ENCODE measurements at regions of chr7 and their contacts with region 1.

Region 1: DNA sequence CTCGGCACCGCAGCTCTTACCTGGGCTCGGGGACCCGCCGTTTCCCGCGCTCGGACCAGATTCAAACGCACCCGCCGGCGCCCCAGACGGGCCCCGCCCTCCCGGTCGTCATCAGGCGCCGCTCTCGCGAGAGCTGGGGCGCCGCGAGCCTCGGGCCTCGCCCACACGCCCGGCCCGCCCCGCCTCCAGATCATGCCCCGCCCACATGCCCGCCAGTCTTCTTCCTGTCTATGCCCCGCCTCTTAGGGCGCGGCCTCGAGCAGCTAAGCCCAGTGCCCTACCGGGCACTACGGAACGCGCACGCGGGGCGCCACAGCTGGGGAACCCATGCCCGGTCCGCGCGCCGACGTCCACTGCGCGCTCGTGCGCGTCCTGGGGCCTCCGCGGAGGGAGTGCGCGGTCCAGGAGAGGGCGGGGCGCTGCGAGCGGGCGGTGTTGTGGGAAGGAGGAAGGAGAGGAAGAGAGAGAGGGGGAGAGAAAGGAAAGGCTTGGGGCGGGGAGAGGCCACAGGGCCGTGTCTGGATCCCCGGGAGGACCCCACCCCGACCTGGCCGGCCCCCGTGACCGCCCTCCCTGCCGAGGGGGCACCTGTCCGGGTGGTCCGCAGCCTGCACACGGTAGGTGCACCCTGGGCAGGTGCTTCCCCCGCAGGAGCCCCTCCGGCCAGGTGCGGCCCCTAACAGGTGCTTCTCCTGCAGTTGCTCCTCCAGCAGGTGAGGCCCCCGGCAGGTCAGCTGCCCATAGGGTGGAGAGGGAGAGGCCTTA is at the start of gene NCAPG2:
- DNase-seq: peak; percentile 97 to 100 (median 98)
- ATAC-seq: peak; percentile 98
- H3K4me3 ChIP-seq: peak within 1 kb of the TSS; percentile 97
- H3K4me3 Mint-ChIP-seq: peak within 1 kb of the TSS; percentile 96
- H3K27ac ChIP-seq: peak within 1 kb of the TSS; percentile 52 to 70
- H3K27ac Mint-ChIP-seq: peak within 1 kb of the TSS; percentile 62
- H3K4me1 ChIP-seq: peaks cover 23% of the 10 kb centered on the region
- H3K4me1 Mint-ChIP-seq: peaks cover 24% of the 10 kb centered on the region
- H3K27me3 ChIP-seq: no peaks in the 10 kb centered on the region
- H3K27me3 Mint-ChIP-seq: no peaks in the 10 kb centered on the region
- CTCF ChIP-seq: peak; percentile 16
- total RNA-seq, gene NCAPG2: 9.9 to 11.8 TPM

Region 2: GRCh38 chr7:157138424-157139110 is 1566.3 kb before region 1 on chr7 and contains the start of gene UBE3C:
- CTCF ChIA-PET with region 1: no interaction called
- POLR2A ChIA-PET with region 1: no interaction called
- intact Hi-C with region 1: loop called in 1 of 2 experiments (anchors 10 kb)
- DNase-seq: peak; percentile 79 to 97 (median 90)
- ATAC-seq: peak; percentile 81
- H3K4me3 ChIP-seq: peak within 1 kb of the TSS; percentile 78
- H3K4me3 Mint-ChIP-seq: peak within 1 kb of the TSS; percentile 92
- H3K27ac ChIP-seq: peak within 1 kb of the TSS; percentile 85 to 86
- H3K27ac Mint-ChIP-seq: peak within 1 kb of the TSS; percentile 98
- H3K4me1 ChIP-seq: peaks cover 44% of the 10 kb centered on the region
- H3K4me1 Mint-ChIP-seq: peaks cover 49% of the 10 kb centered on the region
- H3K27me3 ChIP-seq: no peaks in the 10 kb centered on the region
- H3K27me3 Mint-ChIP-seq: no peaks in the 10 kb centered on the region
- CTCF ChIP-seq: no peak
- total RNA-seq, gene UBE3C: 30.8 to 32.3 TPM

Region 3: DNA sequence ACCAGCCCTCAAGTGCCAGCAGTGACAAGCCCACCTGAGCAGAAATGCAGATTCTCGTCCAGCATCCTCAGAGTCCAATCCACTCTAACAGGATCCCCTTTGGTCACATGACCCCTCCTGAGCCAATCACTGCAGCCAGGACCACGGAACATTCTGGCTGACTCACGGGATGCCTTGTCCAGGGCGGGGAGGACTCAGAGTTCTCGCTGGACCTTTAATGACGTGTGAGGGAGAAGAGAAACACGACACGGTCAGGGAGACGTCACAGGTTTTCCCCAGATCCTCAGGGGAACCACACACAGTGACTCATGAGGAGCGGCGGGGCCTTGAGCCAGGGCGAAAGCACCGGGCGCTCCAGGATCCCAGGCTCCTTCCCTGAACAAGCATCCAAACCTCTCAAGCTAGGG is 272.9 kb before region 1 on chr7:
- CTCF ChIA-PET with region 1: no interaction called
- POLR2A ChIA-PET with region 1: no interaction called
- intact Hi-C with region 1: no loop called
- DNase-seq: no peak
- ATAC-seq: no peak
- H3K4me3 ChIP-seq: no peak overlapping the region
- H3K4me3 Mint-ChIP-seq: no peak overlapping the region
- H3K27ac ChIP-seq: no peak overlapping the region
- H3K27ac Mint-ChIP-seq: no peak overlapping the region
- H3K4me1 ChIP-seq: no peaks in the 10 kb centered on the region
- H3K4me1 Mint-ChIP-seq: no peaks in the 10 kb centered on the region
- H3K27me3 ChIP-seq: peaks cover 0 to 2% of the 10 kb centered on the region in 2 experiments
- H3K27me3 Mint-ChIP-seq: peaks cover 12% of the 10 kb centered on the region
- CTCF ChIP-seq: no peak

Region 4: DNA sequence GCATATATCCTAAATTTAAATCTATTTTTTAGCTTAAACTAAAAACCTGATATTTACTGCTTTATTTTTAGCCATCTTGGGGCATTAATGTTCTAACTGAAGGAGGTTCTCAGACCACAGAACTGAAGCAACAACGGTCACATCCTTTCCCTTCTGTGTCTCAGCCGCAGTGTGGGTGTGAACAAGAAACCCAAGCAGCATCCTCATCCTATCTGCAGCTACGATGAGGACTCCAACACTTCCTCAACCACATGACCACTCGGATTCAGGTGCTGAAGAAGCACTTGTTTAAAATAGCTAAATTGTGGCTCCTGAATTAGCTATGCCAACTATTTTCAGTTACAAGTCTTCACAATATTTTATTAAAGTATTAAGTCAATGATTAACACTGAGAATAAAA is 119.1 kb after region 1 on chr7:
- CTCF ChIA-PET with region 1: interaction called, 8 read pairs
- POLR2A ChIA-PET with region 1: interaction called, 13 read pairs
- intact Hi-C with region 1: loop called (anchors 1 to 10 kb)
- DNase-seq: peak in 10 of 14 experiments; percentile 41 to 95 (median 58)
- ATAC-seq: peak; percentile 75
- H3K4me3 ChIP-seq: no peak overlapping the region
- H3K4me3 Mint-ChIP-seq: peak overlapping the region; percentile 84
- H3K27ac ChIP-seq: peak overlapping the region in 1 of 2 donors; percentile 53
- H3K27ac Mint-ChIP-seq: peak overlapping the region; percentile 90
- H3K4me1 ChIP-seq: peaks cover 59% of the 10 kb centered on the region
- H3K4me1 Mint-ChIP-seq: peaks cover 70% of the 10 kb centered on the region
- H3K27me3 ChIP-seq: no peaks in the 10 kb centered on the region
- H3K27me3 Mint-ChIP-seq: no peaks in the 10 kb centered on the region
- CTCF ChIP-seq: no peak

Region 5: DNA sequence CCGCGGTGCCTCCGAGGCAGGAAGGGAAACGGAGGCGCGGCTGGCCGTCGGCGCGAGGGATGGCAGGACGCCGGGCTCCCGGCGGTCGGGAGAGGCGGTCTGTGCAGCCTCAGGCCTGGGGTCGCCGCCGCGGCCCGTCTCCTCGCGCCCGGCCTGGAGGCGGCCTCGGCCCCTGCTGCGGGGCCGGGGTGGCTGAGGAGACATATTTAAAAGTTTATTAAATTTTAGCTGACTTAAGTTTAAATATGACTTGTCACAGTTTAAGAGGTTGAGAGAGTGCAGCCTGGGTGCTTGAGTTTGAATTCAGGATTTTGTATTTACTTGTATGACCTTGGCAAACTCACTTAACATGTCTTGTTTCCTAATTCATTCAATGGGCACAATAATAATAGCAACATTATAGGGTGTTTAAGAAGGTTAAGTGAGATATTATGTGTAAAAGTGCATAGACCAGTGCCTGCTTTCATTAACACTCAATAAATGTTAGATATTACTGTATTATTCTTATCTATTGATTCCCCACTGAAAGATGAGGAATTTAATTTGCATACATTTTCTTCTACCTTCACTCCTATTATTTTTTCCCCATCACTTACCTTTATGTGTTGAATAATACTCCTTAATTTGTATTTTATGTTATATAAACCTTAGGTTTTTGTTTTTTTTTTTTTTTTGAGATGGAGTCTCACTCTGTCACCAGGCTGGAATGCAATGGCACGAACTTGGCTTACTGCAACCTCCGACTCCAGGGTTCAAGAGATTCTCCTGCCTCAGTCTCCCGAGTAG is 152.2 kb after region 1 on chr7:
- CTCF ChIA-PET with region 1: no interaction called
- POLR2A ChIA-PET with region 1: interaction called, 7 read pairs
- intact Hi-C with region 1: loop called in 1 of 2 experiments (anchors 1 kb)
- DNase-seq: no peak
- ATAC-seq: peak; percentile 4
- H3K4me3 ChIP-seq: peak overlapping the region; percentile 70
- H3K4me3 Mint-ChIP-seq: peak overlapping the region; percentile 88
- H3K27ac ChIP-seq: peak overlapping the region in 1 of 2 donors; percentile 69
- H3K27ac Mint-ChIP-seq: peak overlapping the region; percentile 45
- H3K4me1 ChIP-seq: peaks cover 16% of the 10 kb centered on the region
- H3K4me1 Mint-ChIP-seq: peaks cover 42% of the 10 kb centered on the region
- H3K27me3 ChIP-seq: no peaks in the 10 kb centered on the region
- H3K27me3 Mint-ChIP-seq: no peaks in the 10 kb centered on the region
- CTCF ChIP-seq: no peak

Measured in CD4-positive, alpha-beta T cell (primary cell).